ENCODE measurements at regions of chr13 and their contacts with region 1.

Region 1: DNA sequence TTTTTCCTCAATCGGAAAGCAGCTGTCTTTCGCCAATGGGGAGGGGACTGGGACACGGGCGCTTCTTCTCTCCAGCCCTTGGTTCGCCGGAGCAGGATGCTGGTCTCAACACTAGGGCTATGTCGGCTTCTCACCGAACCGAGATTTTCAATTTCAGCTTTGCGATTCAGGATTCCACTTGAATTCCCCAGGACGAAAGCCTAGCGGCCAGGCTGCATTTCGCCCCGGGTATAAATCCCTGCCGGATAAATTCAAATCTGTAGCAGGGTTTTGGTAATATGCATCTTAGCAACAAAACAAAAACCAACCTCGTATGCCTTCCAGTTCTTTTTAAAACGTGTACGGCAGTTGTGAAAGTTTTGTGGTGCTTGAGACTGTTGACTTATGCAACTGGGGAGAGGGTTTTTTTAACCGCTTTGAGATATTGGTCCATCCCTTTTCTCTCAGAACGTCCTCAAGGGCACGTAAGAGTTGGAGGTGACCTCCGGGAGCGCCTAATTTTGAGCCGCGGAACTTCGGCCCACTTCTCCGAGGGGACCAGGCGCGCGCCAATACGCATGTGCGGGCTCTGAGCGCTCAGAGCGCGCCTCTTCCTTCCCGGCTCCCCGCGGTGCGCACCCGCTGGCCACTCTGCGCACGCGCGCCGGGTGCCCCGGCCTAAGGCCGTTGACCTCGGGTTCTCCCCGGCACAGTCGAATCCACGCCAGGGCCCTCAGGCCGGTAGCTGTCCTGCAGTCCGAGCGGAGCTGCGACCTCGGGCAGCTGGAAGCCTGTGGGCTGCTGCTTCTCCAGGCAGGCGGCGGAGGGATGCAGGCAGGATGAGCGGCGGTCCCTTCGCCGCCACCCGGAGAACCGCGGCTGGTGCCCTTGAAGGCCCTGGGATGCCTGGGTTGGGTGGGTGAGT is 7.6 kb downstream of the POU4F1 start:
- DNase-seq: no peak
- ATAC-seq: no peak
- H3K4me3 ChIP-seq: no peak overlapping the region
- H3K27ac ChIP-seq: no peak overlapping the region
- H3K4me1 ChIP-seq: no peaks in the 10 kb centered on the region
- H3K27me3 ChIP-seq: peaks cover 85% of the 10 kb centered on the region
- CTCF ChIP-seq: no peak

Region 2: DNA sequence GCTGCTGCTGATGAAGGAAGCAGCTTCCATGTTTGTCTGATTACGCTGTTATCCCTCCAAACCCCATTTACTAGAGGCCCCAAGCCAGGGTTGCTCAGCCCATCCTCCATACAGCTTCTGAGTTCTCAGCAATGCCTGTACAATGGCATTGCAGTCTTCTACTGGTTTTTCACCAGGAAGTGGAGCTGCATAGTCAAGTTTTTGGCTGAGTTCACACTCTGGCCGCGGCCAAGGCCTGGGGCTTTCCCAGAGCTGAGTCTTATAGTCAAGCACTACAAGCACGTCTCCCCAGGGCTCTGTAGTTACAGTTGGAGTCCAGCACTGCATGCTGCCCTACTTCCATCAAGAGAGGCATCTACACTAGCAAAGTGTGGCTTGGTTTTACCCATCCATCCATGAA is 174.9 kb before region 1 on chr13:
- CTCF ChIA-PET with region 1: no interaction called
- POLR2A ChIA-PET with region 1: no interaction called
- intact Hi-C with region 1: no loop called
- DNase-seq: no peak
- ATAC-seq: no peak
- H3K4me3 ChIP-seq: no peak overlapping the region
- H3K27ac ChIP-seq: no peak overlapping the region
- H3K4me1 ChIP-seq: no peaks in the 10 kb centered on the region
- H3K27me3 ChIP-seq: no peaks in the 10 kb centered on the region
- CTCF ChIP-seq: no peak

Region 3: DNA sequence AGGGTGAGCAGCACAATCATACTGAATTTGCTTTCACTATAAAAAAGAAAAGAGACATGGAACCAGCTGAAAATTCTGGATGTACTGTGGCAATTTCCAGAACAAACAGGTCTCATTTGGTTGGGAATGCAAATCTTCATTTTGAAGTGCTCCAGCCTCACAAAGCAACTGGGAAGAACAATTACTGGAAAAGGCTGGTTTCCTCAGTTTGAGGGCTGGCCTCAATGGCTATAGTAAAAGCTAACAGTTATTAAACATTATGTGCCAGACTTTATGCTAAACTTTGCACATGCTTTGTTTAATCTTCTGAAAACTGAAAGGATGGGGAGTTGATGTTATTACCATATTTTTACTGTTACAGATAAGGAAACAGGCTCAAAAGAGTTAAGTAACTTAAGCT is 60.2 kb after region 1 on chr13:
- CTCF ChIA-PET with region 1: no interaction called
- POLR2A ChIA-PET with region 1: no interaction called
- intact Hi-C with region 1: no loop called
- DNase-seq: no peak
- ATAC-seq: no peak
- H3K4me3 ChIP-seq: no peak overlapping the region
- H3K27ac ChIP-seq: no peak overlapping the region
- H3K4me1 ChIP-seq: peaks cover 6% of the 10 kb centered on the region; the same call in 1 of the 2 replicates
- H3K27me3 ChIP-seq: no peaks in the 10 kb centered on the region
- CTCF ChIP-seq: no peak

Region 4: GRCh38 chr13:78742659-78743058 is 146.9 kb after region 1 on chr13:
- CTCF ChIA-PET with region 1: no interaction called
- POLR2A ChIA-PET with region 1: no interaction called
- intact Hi-C with region 1: loop called (anchors 10 kb)
- DNase-seq: no peak
- ATAC-seq: no peak
- H3K4me3 ChIP-seq: no peak overlapping the region
- H3K27ac ChIP-seq: no peak overlapping the region
- H3K4me1 ChIP-seq: no peaks in the 10 kb centered on the region
- H3K27me3 ChIP-seq: peaks cover 33% of the 10 kb centered on the region; the same call in 1 of the 2 replicates
- CTCF ChIP-seq: no peak

Measured in PC-3 (cell line).